ENCODE measurements at regions of chr20 and their contacts with region 1.

Region 1: DNA sequence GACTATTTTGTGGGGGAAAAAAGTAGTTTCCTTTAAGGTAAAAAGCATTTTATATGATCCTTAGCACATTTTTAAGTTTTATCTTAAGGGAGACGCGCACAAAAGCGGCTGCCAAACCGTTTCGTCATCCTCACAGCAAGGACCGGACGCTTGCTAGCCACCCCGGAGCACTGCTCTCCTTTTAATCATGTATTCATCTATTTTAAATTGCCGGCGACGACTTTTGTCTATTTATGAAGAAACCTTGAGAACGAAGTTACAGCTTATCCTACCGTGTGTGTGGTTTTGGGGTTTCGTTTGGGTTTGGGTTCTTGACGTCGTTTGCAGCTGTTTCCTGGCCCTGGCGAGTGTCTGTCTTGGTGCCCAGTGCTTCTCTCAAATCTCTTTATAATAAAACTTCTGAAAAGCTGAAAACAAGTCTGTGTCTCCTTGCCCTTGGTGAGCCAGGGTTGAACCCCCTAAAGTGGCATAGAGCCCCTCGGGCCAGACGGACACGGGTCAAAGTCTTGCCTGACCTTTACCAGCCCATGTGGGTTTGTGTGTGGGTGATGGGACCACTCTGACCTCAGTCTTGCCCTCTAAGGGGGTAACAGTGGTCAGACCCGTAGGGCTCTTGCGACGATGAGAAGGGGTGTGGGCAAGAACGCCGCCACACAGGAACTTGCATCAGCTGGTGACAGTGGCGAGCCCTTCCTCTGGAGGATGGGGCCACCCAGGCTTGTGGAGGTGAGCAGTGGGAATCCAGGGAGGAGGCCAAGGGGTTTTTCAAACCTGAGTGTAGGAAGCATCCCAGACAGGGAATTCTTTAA is 117.6 kb downstream of the JPH2 start:
- DNase-seq: peak; percentile 79
- H3K4me3 Mint-ChIP-seq: peak overlapping the region; percentile 72
- H3K27ac Mint-ChIP-seq: peak overlapping the region; percentile 90
- H3K4me1 Mint-ChIP-seq: peaks cover 66% of the 10 kb centered on the region
- H3K27me3 Mint-ChIP-seq: no peaks in the 10 kb centered on the region

Region 2: GRCh38 chr20:44001667-44002596 is 67.5 kb before region 1 on chr20:
- CTCF ChIA-PET with region 1: no interaction called
- intact Hi-C with region 1: loop called (anchors 2 kb)
- DNase-seq: peak; percentile 71
- H3K4me3 Mint-ChIP-seq: no peak overlapping the region
- H3K27ac Mint-ChIP-seq: peak overlapping the region; percentile 0
- H3K4me1 Mint-ChIP-seq: peaks cover 14% of the 10 kb centered on the region
- H3K27me3 Mint-ChIP-seq: peaks cover 3% of the 10 kb centered on the region

Region 3: GRCh38 chr20:44028868-44029847 is 40.2 kb before region 1 on chr20:
- CTCF ChIA-PET with region 1: no interaction called
- intact Hi-C with region 1: loop called (anchors 1 kb)
- DNase-seq: peak; percentile 60
- H3K4me3 Mint-ChIP-seq: no peak overlapping the region
- H3K27ac Mint-ChIP-seq: peak overlapping the region; percentile 79
- H3K4me1 Mint-ChIP-seq: peaks cover 33% of the 10 kb centered on the region
- H3K27me3 Mint-ChIP-seq: peaks cover 3% of the 10 kb centered on the region